MCF 10A (cell line): ENCODE measurements at regions of chr10 and their contacts with region 1.

Region 1: GRCh38 chr10:101467286-101467770 is 113.4 kb downstream of the BTRC start:
- DNase-seq: peak; percentile 83
- H3K4me3 Mint-ChIP-seq: no peak overlapping the region
- H3K27ac Mint-ChIP-seq: no peak overlapping the region
- H3K4me1 Mint-ChIP-seq: no peaks in the 10 kb centered on the region
- H3K27me3 Mint-ChIP-seq: no peaks in the 10 kb centered on the region
- CTCF ChIP-seq: peak; percentile 72

Region 2: GRCh38 chr10:101222683-101223273 is 244.6 kb before region 1 on chr10:
- CTCF ChIA-PET with region 1: interaction called, 16 read pairs
- POLR2A ChIA-PET with region 1: interaction called, 5 read pairs
- intact Hi-C with region 1: no loop called
- DNase-seq: no peak
- H3K4me3 Mint-ChIP-seq: no peak overlapping the region
- H3K27ac Mint-ChIP-seq: no peak overlapping the region
- H3K4me1 Mint-ChIP-seq: peaks cover 18% of the 10 kb centered on the region
- H3K27me3 Mint-ChIP-seq: peaks cover 31% of the 10 kb centered on the region
- CTCF ChIP-seq: no peak

Region 3: DNA sequence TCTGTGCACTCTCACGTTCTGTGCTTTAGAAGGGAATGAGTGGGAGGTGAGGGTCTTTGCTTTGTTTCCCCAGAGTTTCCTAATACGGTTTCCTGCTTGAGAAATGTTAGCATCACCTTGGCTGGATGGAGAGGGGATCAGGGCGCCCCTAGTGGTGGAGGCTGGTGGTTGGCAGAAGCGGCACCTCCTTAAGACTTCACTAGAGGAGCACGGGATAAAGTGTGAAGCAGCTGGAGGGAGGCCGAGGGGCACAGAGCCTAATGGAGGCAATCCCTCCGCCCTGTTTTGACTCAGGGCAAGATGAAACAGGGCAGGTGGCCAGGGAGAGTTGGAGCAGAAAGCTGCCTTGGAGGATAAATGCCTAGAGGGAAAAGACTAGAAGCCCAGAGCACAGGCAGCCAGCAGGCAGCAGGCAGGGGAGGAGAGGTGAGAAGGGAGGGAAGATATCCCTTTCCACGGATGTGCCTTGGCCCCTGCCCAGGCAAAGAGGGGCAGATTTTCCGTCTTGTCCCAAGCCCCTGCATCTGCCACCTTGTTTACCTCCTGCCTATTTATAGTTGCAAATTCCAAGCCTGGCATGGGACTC is 169.3 kb before region 1 on chr10:
- CTCF ChIA-PET with region 1: interaction called, 15 read pairs
- POLR2A ChIA-PET with region 1: no interaction called
- intact Hi-C with region 1: loop called (anchors 1 kb)
- DNase-seq: peak; percentile 69
- H3K4me3 Mint-ChIP-seq: no peak overlapping the region
- H3K27ac Mint-ChIP-seq: no peak overlapping the region
- H3K4me1 Mint-ChIP-seq: peaks cover 10% of the 10 kb centered on the region
- H3K27me3 Mint-ChIP-seq: peaks cover 65% of the 10 kb centered on the region
- CTCF ChIP-seq: peak; percentile 72

Region 4: GRCh38 chr10:101453791-101454718 is 13.3 kb before region 1 on chr10:
- CTCF ChIA-PET with region 1: interaction called, 50 read pairs
- POLR2A ChIA-PET with region 1: interaction called, 7 read pairs
- intact Hi-C with region 1: no loop called
- DNase-seq: no peak
- H3K4me3 Mint-ChIP-seq: no peak overlapping the region
- H3K27ac Mint-ChIP-seq: no peak overlapping the region
- H3K4me1 Mint-ChIP-seq: peaks cover 6% of the 10 kb centered on the region
- H3K27me3 Mint-ChIP-seq: no peaks in the 10 kb centered on the region
- CTCF ChIP-seq: no peak

Region 5: DNA sequence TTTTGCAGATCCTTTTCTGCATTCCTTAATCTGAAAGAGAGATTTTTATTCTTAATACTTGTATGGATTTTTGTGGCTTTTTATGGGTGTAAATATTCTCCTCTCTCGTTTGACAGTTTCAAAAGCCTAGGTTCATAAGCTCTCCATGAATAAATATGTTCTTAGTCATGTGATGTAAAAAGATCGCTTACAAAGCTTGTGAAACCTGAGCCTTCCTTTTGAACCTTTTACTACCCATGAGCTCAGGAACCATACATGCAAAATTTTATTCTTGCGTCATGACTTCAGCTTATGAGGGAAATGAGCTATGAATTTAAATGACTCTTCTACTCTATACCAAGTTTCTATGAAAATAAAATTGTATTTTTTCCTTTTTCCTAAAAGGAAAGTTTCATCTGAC is 22.0 kb after region 1 on chr10:
- CTCF ChIA-PET with region 1: interaction called, 16 read pairs
- POLR2A ChIA-PET with region 1: interaction called, 4 read pairs
- intact Hi-C with region 1: no loop called
- DNase-seq: peak; percentile 59
- H3K4me3 Mint-ChIP-seq: no peak overlapping the region
- H3K27ac Mint-ChIP-seq: no peak overlapping the region
- H3K4me1 Mint-ChIP-seq: peaks cover 17% of the 10 kb centered on the region
- H3K27me3 Mint-ChIP-seq: no peaks in the 10 kb centered on the region
- CTCF ChIP-seq: no peak

Region 6: GRCh38 chr10:101569838-101570766 is 102.8 kb after region 1 on chr10:
- CTCF ChIA-PET with region 1: interaction called, 17 read pairs
- POLR2A ChIA-PET with region 1: interaction called, 3 read pairs
- intact Hi-C with region 1: no loop called
- DNase-seq: peak; percentile 69
- H3K4me3 Mint-ChIP-seq: peak overlapping the region; percentile 72
- H3K27ac Mint-ChIP-seq: no peak overlapping the region
- H3K4me1 Mint-ChIP-seq: peaks cover 5% of the 10 kb centered on the region
- H3K27me3 Mint-ChIP-seq: peaks cover 16% of the 10 kb centered on the region
- CTCF ChIP-seq: peak; percentile 94

Region 7: DNA sequence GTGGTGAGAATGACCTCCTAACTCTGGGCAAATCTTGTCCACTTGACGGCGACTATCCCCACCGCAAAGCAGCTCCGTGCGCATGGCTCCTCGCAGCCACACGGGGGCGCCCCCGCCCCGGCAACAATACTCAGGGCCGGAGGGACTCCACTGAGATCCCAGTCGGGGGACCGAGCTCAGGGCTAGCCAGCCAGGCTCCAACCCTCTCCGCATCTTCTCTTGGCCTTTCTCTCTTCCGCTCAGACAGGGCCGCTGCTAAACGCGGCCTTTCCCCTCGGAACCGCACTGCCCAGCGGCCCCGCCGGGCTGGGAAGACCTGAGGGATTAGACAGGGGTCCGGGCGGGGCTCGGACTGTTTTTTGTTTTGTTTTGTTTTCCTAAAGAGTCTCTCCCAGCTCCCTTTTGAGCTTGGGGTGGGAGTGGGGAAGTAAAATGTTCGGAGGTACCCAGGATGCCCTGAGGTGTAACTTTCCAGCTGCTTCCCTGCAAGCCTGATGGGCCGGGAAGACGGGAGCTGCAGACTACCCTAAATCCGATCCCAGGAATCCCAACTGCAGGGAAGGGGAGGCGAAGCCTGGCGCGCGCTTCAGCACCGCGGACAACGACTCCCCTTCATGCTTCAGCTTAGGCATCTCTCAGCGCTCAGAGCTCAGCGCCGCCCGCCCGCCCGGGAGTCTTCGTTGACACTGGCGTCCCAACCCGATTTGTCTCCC is 373.6 kb after region 1 on chr10:
- CTCF ChIA-PET with region 1: no interaction called
- POLR2A ChIA-PET with region 1: no interaction called
- intact Hi-C with region 1: no loop called
- DNase-seq: peak; percentile 79
- H3K4me3 Mint-ChIP-seq: peak overlapping the region; percentile 57
- H3K27ac Mint-ChIP-seq: no peak overlapping the region
- H3K4me1 Mint-ChIP-seq: peaks cover 15% of the 10 kb centered on the region
- H3K27me3 Mint-ChIP-seq: no peaks in the 10 kb centered on the region
- CTCF ChIP-seq: peak; percentile 85